Posterior vena cava (tissue), 2 donors: ENCODE measurements at regions of chr4 and their contacts with region 1.

Region 1: DNA sequence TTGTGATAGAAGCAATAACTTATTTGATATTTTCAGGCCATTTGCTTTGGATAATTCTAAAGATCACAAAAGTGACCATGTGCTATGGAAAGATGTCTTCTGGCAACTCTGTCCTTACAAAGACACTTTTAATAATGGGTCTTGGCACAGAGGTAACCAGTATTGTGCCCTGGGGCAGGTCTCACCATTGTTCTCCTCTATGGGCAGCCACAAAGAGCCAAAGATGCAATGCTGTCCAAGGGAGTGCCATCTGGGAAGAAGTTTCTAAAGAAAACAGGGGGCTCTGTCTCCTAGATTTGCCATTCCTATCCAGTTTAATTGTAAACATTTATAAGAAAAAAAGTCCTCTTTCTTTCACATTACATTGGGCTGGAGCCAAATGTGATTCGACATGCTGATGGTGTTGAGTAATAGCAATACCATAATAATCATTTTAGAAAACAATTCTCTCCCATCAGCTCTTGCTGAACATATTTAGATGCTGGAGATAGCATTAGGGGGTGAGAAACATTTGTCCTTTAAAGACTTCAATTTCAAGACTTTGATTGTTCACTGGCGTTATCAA is 179.9 kb downstream of the KIT start:
- DNase-seq: no peak

Region 2: GRCh38 chr4:54322818-54323417 is 514.7 kb before region 1 on chr4:
- intact Hi-C with region 1: loop called in 1 of 2 experiments (anchors 5 kb)
- DNase-seq: no peak

Region 3: DNA sequence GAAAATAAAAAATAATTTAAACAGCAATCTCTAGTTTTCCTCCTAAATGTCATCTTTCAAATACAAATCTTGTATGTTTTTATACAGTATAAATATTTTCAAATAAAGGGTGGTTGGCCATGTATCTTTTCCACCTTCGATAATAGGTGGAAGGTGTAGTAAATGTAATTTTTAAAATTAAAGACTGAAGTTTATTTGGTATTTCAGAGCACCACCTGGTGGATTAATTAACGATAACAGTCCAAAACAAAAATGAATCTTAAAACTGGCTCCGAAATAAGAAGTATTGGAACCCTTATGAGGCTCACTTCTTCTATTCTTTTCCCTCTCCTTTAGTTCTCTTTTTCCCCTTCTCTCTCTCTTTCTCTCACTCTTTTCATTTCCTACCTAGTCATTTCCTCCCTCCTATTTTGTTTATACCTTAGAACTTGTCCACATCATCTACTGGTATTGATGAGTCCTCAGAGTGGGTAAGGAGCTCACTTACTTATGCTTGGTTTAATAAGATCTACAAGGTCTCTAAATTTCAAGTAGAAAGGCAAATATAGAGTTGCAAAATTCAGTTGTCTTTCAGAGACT is 899.0 kb after region 1 on chr4:
- intact Hi-C with region 1: no loop called
- DNase-seq: no peak